ENCODE measurements at regions of chr7 and their contacts with region 1.

Region 1: DNA sequence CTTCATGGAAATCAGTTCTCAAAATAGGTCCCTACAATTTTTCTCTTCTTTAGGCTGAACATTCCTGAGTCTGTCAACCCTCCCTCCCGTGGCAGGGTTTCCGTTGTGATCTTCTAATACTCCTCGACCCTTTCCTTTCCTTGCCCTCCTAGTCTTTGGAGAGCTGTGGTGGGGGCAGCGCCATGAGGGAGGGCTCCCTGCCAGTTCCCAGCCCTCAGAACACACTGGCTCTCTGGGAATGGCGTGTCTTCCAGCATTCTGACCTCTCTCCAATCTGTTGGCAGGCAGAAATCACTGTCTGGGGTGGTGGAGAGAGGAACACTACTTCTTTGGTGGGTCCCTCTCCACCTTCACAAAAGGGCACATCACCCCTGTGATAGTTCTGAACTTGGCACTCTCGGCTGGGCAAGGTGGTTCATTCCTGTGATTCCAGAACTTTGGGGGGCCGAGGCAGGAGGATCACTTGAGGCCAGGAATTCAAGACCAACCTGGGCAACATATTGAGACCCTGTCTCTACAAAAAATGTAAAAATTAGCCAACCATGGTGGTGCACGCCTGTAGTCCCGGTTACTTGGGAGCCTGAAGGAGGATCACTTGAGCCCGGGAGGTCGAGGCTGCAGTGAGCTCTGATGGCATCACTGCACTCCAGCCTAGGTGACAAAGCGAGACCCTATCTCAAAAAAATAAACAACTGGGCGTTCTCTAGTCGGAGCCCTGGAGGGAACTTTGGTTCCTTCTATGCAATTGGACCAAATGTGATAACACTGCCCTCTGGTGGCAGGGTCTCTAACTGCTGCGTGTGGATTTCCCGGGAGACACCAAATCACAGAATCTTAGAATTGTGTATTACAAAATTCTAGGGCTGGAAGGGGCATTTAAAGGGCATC is 13.1 kb upstream of the ARPC1A start:
- DNase-seq: peak; percentile 79 to 80
- H3K4me3 ChIP-seq: no peak overlapping the region
- H3K27ac ChIP-seq: peak overlapping the region; percentile 58 to 69
- H3K4me1 ChIP-seq: peaks cover 0 to 22% (median 12%) of the 10 kb centered on the region in 4 donors
- H3K27me3 ChIP-seq: no peaks in the 10 kb centered on the region
- CTCF ChIP-seq: peak; percentile 83 to 88

Region 2: GRCh38 chr7:98922393-98923187 is 390.0 kb before region 1 on chr7:
- intact Hi-C with region 1: loop called (anchors 10 kb)
- DNase-seq: peak in 1 of 2 donors; percentile 82
- H3K4me3 ChIP-seq: no peak overlapping the region
- H3K27ac ChIP-seq: peak overlapping the region; percentile 32 to 47
- H3K4me1 ChIP-seq: no peaks in the 10 kb centered on the region
- H3K27me3 ChIP-seq: no peaks in the 10 kb centered on the region
- CTCF ChIP-seq: no peak

Region 3: DNA sequence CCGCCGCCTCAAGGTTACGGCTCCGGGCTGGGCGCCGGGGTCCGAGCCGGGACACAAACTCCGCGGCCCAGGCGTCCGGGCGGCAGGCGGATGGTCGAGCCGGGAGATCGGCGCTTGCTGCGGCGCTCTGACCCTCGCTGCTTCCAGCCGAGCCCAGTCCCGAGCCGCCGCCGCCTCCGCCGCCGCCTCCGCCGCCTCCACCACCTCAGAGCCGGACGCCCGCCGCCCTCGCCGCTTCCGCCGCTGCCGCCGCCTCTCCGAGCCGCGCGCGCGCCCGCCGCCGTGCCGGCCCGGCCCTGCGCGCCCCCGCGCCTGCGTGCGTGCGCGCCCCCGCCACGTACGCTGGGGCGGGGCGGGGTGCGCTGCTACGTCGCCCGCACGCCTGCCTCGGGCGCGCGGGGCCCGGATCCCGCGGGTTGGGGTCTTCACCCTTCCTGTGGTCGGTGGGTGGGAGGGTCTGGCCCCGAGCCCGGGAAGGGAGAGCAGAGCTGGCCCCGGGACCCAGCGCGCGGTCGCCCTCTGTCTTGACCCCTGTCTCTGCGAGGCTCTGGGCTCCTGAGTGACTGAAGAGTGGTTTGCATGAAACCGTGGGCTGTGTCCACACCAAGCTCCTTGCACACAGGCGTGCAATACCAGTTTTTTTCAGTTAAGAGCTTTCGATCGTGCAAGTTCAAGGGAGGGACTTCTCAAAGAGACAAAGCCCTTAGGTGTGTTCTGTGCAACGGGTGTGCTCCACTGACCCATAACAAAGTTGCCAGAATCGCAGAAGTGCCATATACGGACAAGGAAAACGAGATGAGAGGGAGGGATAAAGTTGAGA is 168.5 kb before region 1 on chr7 and contains the start of gene SMURF1:
- intact Hi-C with region 1: loop called (anchors 5 kb)
- DNase-seq: peak; percentile 59 to 83
- H3K4me3 ChIP-seq: peak within 1 kb of the TSS; percentile 92 to 100
- H3K27ac ChIP-seq: peak within 1 kb of the TSS; percentile 95 to 100
- H3K4me1 ChIP-seq: peaks cover 0 to 38% (median 21%) of the 10 kb centered on the region in 4 donors
- H3K27me3 ChIP-seq: no peaks in the 10 kb centered on the region
- CTCF ChIP-seq: no peak

Region 4: GRCh38 chr7:99531354-99531765 is 218.8 kb after region 1 on chr7:
- intact Hi-C with region 1: no loop called
- DNase-seq: peak in 1 of 2 donors; percentile 12
- H3K4me3 ChIP-seq: no peak overlapping the region
- H3K27ac ChIP-seq: no peak overlapping the region
- H3K4me1 ChIP-seq: no peaks in the 10 kb centered on the region
- H3K27me3 ChIP-seq: no peaks in the 10 kb centered on the region
- CTCF ChIP-seq: no peak

Measured in tibial artery (tissue), 4 donors.